AG04450 (cell line): ENCODE measurements at regions of chr19 and their contacts with region 1.

Region 1: DNA sequence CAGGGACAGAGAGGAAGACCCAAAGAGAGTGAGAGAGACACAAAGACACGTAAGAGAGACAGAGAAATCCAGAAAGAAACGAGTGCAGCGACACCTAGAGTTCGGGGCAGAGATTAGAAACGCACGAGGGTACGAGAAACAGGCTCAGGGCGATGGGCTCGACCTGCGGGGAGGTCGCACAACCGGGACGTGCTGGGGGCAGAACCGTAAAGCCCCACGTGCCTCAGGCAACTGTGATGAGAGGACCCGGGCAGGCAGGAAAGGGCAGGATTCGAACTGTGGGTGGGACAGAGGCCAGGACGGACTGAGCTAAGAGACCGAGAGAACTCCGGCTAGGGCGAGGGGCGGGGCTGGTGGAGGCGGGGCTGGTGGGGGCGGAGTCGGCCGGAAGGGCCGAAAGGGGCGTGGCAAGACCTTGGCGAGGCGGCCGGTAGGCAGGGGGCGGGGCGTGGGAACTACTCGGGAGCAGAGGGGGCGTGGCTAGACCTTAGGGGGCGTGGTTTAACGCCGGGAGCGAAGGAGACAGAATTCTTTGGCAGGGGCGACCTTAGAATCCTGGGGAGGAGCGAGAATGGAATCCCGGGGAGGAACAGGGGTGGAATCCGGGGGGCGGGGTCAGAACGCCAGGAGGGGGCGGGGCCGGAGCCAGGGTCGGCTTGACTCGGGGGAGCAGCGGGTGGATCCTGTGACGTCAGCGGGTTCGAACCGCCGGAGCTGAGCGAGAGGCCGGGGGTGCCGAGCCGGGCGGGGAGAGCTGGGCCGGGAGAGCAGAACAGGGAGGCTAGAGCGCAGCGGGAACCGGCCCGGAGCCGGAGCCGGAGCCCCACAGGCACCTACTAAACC is at the start of gene NECTIN2:
- DNase-seq: peak; percentile 98
- H3K4me3 ChIP-seq: peak within 1 kb of the TSS; percentile 94
- H3K27ac ChIP-seq: peak within 1 kb of the TSS; percentile 86
- H3K27me3 ChIP-seq: no peaks in the 10 kb centered on the region
- CTCF ChIP-seq: peak; percentile 83
- polyA plus RNA-seq, gene NECTIN2: 80.2 and 110 TPM in 2 replicates

Region 2: DNA sequence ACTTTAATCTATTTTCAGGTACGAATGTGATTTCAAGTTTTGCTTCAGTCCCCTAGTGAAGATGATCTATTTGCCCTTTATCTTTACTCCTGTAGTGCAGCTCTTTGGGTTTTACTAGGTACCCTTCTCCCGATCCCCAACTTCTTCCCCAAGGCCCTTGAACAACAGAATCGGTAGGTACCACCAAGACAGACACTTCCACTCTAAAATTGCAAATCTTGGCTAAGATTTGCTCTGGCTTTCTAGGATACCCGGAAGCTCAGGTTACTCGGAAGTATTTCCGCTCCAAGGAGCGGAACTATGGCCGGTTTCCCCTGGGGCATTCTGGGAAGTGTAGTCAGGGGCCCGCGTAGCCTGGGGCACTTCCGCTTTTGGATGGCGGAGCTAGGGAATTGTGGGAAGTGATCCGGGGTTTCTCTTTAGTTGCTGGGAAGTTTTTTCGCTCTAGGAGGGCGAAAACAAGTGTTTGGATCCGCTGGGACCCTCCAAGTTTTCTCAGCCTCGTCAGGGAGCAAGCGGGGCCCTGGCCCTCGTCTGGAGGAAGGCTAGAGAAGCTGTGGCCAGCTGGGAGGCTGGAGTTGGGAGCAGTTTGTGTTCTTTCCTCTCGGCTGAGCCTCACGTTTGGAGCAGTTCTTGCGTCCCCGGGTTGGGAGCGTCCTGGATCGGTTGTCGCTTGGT is 638.6 kb before region 1 on chr19:
- CTCF ChIA-PET with region 1: no interaction called
- POLR2A ChIA-PET with region 1: no interaction called
- DNase-seq: peak; percentile 86
- H3K4me3 ChIP-seq: peak overlapping the region; percentile 92
- H3K27ac ChIP-seq: peak overlapping the region; percentile 89
- H3K27me3 ChIP-seq: no peaks in the 10 kb centered on the region
- CTCF ChIP-seq: no peak

Region 3: DNA sequence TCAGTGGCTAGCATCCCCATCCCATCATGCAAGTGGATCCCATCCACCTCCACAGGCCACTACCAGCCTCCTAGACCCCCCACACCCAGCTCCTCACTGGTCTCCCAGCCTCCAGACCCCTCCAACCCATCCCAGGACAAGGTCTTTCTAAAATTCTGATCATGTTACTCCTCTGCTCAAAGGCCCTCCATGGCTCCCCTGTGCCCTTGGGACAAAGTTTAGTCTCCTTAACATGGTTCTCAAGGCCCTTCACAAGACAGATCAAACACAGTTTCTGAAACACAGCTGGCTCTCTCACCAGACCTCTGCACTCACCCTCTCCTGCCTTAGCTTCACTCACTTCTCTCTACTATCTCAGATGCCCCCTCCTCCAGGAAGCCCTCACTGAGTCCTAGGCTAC is 165.3 kb before region 1 on chr19:
- CTCF ChIA-PET with region 1: interaction called, 4 read pairs
- POLR2A ChIA-PET with region 1: interaction called, 15 read pairs
- DNase-seq: no peak
- H3K4me3 ChIP-seq: no peak overlapping the region
- H3K27ac ChIP-seq: no peak overlapping the region
- H3K27me3 ChIP-seq: no peaks in the 10 kb centered on the region
- CTCF ChIP-seq: no peak

Region 4: DNA sequence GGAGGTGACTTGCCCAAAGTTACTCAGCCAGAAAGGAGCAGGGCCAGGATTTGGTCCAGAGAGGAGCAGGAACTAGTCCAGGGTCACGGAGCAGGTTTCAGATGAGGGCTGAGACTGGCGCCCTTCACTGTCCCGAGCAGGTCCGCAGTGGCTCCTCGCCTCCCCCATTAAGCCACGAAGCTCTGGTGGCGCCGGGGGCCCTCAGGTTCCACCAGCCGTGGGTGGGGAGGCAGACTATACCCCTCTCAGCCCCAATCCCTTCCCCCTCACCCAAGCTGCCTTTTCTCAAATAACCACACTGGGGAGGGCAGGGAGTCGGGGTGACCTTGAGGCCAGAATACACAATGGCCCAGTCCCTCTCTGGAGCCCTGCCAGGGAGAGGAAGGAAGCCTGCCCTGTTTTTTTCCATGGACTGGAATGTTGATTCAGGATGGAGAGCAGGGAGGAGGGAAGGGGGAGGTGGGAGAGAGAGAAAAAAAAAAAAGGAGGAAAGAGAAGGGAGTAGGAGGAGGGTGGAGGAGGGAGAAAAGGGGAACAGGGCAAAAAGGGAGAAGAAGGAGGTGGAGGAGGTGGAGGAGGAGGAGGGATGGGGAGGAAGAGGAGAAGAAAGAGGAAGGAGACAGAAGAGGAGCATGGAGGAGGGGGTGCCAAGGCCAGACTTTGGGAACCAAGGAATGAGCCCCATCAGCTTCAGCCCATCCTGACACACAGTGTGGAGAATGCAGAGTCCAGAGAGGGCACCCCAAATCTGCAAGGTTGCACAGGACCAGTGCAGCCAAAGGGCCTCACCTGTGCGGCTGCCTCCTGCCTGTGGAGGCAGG is 127.2 kb before region 1 on chr19:
- CTCF ChIA-PET with region 1: interaction called, 32 read pairs
- POLR2A ChIA-PET with region 1: no interaction called
- DNase-seq: peak; percentile 7
- H3K4me3 ChIP-seq: no peak overlapping the region
- H3K27ac ChIP-seq: no peak overlapping the region
- H3K27me3 ChIP-seq: no peaks in the 10 kb centered on the region
- CTCF ChIP-seq: no peak

Region 5: DNA sequence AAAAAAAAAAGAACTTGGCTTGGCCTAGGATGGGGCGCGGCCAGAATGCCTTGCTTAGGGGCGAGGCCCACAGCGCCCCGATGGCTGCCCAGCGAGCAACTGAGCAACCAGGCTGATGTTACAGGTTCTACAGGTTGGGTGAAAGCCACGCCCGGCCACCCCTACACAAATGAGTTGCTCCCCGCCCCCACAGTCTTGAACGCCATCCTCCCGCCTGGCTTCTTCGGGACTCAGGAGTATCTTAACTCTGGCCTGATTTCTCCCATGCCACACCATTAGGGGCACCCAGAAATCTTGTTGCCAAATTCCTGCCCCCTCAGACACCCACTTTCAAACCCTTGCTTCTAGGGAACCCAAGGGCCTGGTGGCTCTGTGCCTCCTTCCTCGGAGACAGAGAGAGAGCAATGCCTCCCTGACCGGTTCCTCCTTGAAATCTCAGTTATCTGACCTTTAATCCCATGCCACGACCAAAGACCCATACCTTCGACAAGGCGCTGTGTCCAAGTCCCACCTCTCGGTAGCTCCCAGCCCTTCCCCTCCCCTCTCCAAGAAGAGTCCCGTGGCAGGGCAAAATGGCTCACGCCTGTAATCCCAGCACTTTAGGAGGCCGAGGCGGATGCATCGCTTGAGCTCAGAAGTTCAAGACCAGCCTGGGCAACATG is 69.3 kb before region 1 on chr19:
- CTCF ChIA-PET with region 1: interaction called, 39 read pairs
- POLR2A ChIA-PET with region 1: no interaction called
- DNase-seq: no peak
- H3K4me3 ChIP-seq: no peak overlapping the region
- H3K27ac ChIP-seq: no peak overlapping the region
- H3K27me3 ChIP-seq: no peaks in the 10 kb centered on the region
- CTCF ChIP-seq: no peak

Region 6: GRCh38 chr19:44782729-44783128 is 63.1 kb before region 1 on chr19:
- CTCF ChIA-PET with region 1: interaction called, 39 read pairs
- POLR2A ChIA-PET with region 1: no interaction called
- DNase-seq: no peak
- H3K4me3 ChIP-seq: no peak overlapping the region
- H3K27ac ChIP-seq: no peak overlapping the region
- H3K27me3 ChIP-seq: no peaks in the 10 kb centered on the region
- CTCF ChIP-seq: 0 out of 2 replicates have a peak, but pooled peaks have one; percentile 7

Region 7: GRCh38 chr19:44824761-44825160 is 21.1 kb before region 1 on chr19:
- CTCF ChIA-PET with region 1: interaction called, 16 read pairs
- POLR2A ChIA-PET with region 1: interaction called, 3 read pairs
- DNase-seq: no peak
- H3K4me3 ChIP-seq: no peak overlapping the region
- H3K27ac ChIP-seq: no peak overlapping the region
- H3K27me3 ChIP-seq: peaks cover 7% of the 10 kb centered on the region
- CTCF ChIP-seq: no peak

Region 8: GRCh38 chr19:44955587-44956439 is 110.0 kb after region 1 on chr19:
- CTCF ChIA-PET with region 1: no interaction called
- POLR2A ChIA-PET with region 1: no interaction called
- DNase-seq: no peak
- H3K4me3 ChIP-seq: peak overlapping the region; percentile 97
- H3K27ac ChIP-seq: peak overlapping the region; percentile 52
- H3K27me3 ChIP-seq: no peaks in the 10 kb centered on the region
- CTCF ChIP-seq: no peak